ENCODE measurements at regions of chr6 and their contacts with region 1.

Region 1: GRCh38 chr6:80209430-80209829 is 103.0 kb downstream of the BCKDHB start:
- DNase-seq: no peak
- ATAC-seq: no peak
- H3K4me3 ChIP-seq: no peak overlapping the region
- H3K27ac ChIP-seq: no peak overlapping the region
- H3K4me1 ChIP-seq: no peaks in the 10 kb centered on the region
- H3K27me3 ChIP-seq: no peaks in the 10 kb centered on the region
- CTCF ChIP-seq: no peak
- EP300 ChIP-seq: no peak
- POLR2A ChIP-seq: no peak
- RAD21 ChIP-seq: no peak

Region 2: GRCh38 chr6:79971195-79971594 is 238.2 kb before region 1 on chr6:
- CTCF ChIA-PET with region 1: no interaction called
- POLR2A ChIA-PET with region 1: no interaction called
- in situ Hi-C with region 1: loop called (anchors 10 kb)
- intact Hi-C with region 1: no loop called
- DNase-seq: no peak
- ATAC-seq: no peak
- H3K4me3 ChIP-seq: no peak overlapping the region
- H3K27ac ChIP-seq: no peak overlapping the region
- H3K4me1 ChIP-seq: no peaks in the 10 kb centered on the region
- H3K27me3 ChIP-seq: no peaks in the 10 kb centered on the region
- CTCF ChIP-seq: no peak
- EP300 ChIP-seq: no peak
- POLR2A ChIP-seq: no peak
- RAD21 ChIP-seq: no peak